SK-N-SH (cell line): ENCODE measurements at regions of chr13 and their contacts with region 1.

Region 1: DNA sequence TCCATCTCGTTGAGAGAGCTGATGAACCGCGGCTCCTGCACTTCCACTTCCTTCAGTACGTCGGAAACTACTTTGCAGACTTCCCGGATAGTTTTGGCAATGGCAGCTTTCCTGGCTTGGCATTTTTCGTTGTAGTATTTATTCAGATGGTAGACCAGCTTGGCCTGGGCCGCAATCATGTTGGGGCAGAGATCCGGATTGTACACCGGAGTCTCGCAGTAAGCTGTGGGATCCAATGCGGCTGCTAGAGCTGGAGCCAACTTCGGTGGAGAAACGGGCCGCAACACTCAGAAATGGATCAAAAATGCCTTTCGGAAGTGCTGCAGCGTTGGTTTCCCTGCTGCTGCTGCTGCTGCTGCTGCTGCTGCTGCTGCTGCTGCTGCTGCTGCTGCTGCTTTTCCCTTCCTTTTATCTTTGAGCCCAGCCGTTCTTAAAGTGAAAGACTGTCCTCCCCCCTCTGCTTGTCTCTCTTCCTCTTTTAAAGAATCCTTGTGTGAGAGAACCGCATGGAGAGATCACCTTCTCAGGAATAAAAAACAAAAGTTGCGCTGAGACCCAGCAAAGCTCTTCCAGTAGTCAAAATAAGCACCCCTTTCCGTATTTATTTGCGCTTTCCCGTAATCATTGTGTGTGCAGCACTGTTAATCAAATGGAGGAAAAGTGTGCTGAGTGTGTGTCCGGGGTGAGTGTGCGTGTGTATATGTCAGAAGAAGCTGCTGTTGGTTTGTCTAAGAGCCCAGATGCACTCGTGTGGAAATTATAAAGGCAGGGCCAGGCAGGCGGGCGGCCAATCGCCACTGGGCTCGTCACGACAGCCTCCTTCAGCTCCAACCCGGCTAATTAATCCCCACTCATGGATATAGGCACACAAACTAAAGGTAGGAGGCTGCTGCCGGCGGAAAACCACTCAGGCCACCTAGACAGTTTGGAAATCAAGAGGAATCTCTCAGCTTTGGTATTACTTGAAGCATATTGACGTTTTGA is at the start of gene MAB21L1:
- DNase-seq: peak; percentile 90
- H3K4me3 ChIP-seq: peak within 1 kb of the TSS; percentile 64 to 82
- H3K27ac ChIP-seq: peak within 1 kb of the TSS; percentile 93 to 99
- H3K4me1 ChIP-seq: peaks cover 2 to 6% of the 10 kb centered on the region in 2 experiments; a peak in 3 of 4 replicates
- H3K27me3 ChIP-seq: no peaks in the 10 kb centered on the region
- CTCF ChIP-seq: no peak
- EP300 ChIP-seq: peak in 1 of 2 experiments; percentile 23; a peak in 1 of 4 replicates
- RAD21 ChIP-seq: peak; percentile 22; the same call in 1 of the 2 replicates
- polyA plus RNA-seq, gene MAB21L1: 42.3 and 44.8 TPM in 2 replicates

Region 2: GRCh38 chr13:34637138-34637537 is 839.1 kb before region 1 on chr13:
- CTCF ChIA-PET with region 1: no interaction called
- POLR2A ChIA-PET with region 1: no interaction called
- DNase-seq: no peak
- H3K4me3 ChIP-seq: no peak overlapping the region
- H3K27ac ChIP-seq: no peak overlapping the region
- H3K4me1 ChIP-seq: peaks cover 0 to 7% of the 10 kb centered on the region in 2 experiments; a peak in 1 of 4 replicates
- H3K27me3 ChIP-seq: no peaks in the 10 kb centered on the region
- CTCF ChIP-seq: no peak
- EP300 ChIP-seq: no peak
- RAD21 ChIP-seq: no peak

Region 3: DNA sequence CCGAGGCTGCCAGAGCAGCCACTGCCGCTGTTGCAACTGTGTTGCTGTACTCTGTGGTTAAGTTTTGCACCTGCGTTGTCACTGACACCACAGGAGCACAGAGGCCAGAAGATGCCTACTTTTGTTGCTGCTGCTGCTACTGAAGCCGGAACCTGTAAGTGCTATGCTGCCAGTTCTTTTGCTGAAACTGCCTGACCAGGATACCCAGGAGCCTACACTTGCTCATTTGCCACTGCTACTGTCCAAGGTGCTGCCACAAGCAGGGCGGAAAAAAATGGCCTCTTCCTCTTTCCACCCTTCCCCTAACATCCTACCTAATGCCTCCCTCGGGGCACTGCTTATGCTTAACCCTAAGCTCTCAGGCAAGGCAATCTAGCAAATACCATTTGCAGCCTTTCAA is 563.2 kb before region 1 on chr13:
- CTCF ChIA-PET with region 1: no interaction called
- POLR2A ChIA-PET with region 1: no interaction called
- DNase-seq: no peak
- H3K4me3 ChIP-seq: no peak overlapping the region
- H3K27ac ChIP-seq: no peak overlapping the region
- H3K4me1 ChIP-seq: no peaks in the 10 kb centered on the region
- H3K27me3 ChIP-seq: no peaks in the 10 kb centered on the region
- CTCF ChIP-seq: no peak
- EP300 ChIP-seq: no peak
- RAD21 ChIP-seq: no peak

Region 4: GRCh38 chr13:35455022-35455421 is 21.2 kb before region 1 on chr13:
- CTCF ChIA-PET with region 1: no interaction called
- POLR2A ChIA-PET with region 1: no interaction called
- DNase-seq: no peak
- H3K4me3 ChIP-seq: no peak overlapping the region
- H3K27ac ChIP-seq: no peak overlapping the region
- H3K4me1 ChIP-seq: no peaks in the 10 kb centered on the region; a peak in 1 of 4 replicates
- H3K27me3 ChIP-seq: no peaks in the 10 kb centered on the region
- CTCF ChIP-seq: no peak
- EP300 ChIP-seq: no peak
- RAD21 ChIP-seq: no peak

Region 5: DNA sequence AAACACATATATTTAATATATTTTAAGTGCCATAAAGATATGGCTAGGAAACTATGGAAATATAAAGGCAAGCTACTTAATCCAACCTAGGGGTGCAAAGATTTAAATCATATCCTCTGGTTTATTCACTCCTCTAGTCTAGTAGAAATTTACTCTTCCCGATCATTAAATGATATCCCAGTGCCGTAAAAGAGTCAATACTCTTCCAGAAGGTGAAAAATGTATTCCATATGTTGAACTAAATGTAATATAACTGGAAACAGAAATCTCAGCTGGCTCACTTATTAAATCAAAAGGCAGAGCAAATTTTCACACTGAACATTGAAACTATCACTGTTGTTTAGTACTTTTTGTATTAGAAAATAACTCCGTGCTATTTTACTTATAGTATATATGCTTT is 10.9 kb before region 1 on chr13:
- CTCF ChIA-PET with region 1: interaction called, 4 read pairs
- POLR2A ChIA-PET with region 1: interaction called, 10 read pairs
- DNase-seq: no peak
- H3K4me3 ChIP-seq: no peak overlapping the region
- H3K27ac ChIP-seq: peak overlapping the region in 1 of 2 experiments; percentile 80; a peak in 2 of 4 replicates
- H3K4me1 ChIP-seq: peaks cover 9 to 16% of the 10 kb centered on the region in 2 experiments
- H3K27me3 ChIP-seq: no peaks in the 10 kb centered on the region
- CTCF ChIP-seq: no peak
- EP300 ChIP-seq: peak in 1 of 2 experiments; percentile 78; a peak in 1 of 4 replicates
- RAD21 ChIP-seq: no peak; the same call in 1 of the 2 replicates

Region 6: GRCh38 chr13:35501661-35502235 is 25.5 kb after region 1 on chr13:
- CTCF ChIA-PET with region 1: interaction called, 5 read pairs
- POLR2A ChIA-PET with region 1: interaction called, 10 read pairs
- DNase-seq: no peak
- H3K4me3 ChIP-seq: no peak overlapping the region
- H3K27ac ChIP-seq: peak overlapping the region in 1 of 2 experiments; percentile 86; a peak in 2 of 4 replicates
- H3K4me1 ChIP-seq: peaks cover 9 to 33% of the 10 kb centered on the region in 2 experiments; a peak in 3 of 4 replicates
- H3K27me3 ChIP-seq: no peaks in the 10 kb centered on the region
- CTCF ChIP-seq: no peak
- EP300 ChIP-seq: no peak
- RAD21 ChIP-seq: no peak

Region 7: DNA sequence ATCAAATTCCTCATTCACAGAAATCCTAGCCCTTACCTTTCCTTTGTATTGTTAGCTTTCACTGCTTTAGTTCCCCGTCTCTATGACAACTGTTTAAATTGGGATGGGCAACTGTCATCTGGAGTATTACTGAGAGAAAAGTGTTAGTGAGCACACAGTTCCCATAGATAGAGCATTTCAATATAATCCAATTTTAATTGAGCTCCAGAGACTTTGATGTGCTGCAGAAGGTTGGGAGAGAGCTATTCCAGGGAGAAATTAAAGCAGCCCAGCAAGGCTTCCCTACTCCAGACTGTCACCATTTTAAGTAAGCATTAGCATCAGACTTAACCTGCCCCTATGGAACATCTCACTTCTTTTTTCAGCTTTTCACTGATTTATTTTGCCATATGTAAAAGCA is 55.3 kb after region 1 on chr13:
- CTCF ChIA-PET with region 1: interaction called, 5 read pairs
- POLR2A ChIA-PET with region 1: interaction called, 11 read pairs
- DNase-seq: peak; percentile 24
- H3K4me3 ChIP-seq: no peak overlapping the region
- H3K27ac ChIP-seq: peak overlapping the region in 1 of 2 experiments; percentile 96; a peak in 2 of 4 replicates
- H3K4me1 ChIP-seq: peaks cover 0 to 62% of the 10 kb centered on the region in 2 experiments; a peak in 2 of 4 replicates
- H3K27me3 ChIP-seq: no peaks in the 10 kb centered on the region
- CTCF ChIP-seq: no peak
- EP300 ChIP-seq: peak in 1 of 2 experiments; percentile 36; a peak in 1 of 4 replicates
- RAD21 ChIP-seq: 0 out of 2 replicates have a peak, but pooled peaks have one; percentile 9

Region 8: DNA sequence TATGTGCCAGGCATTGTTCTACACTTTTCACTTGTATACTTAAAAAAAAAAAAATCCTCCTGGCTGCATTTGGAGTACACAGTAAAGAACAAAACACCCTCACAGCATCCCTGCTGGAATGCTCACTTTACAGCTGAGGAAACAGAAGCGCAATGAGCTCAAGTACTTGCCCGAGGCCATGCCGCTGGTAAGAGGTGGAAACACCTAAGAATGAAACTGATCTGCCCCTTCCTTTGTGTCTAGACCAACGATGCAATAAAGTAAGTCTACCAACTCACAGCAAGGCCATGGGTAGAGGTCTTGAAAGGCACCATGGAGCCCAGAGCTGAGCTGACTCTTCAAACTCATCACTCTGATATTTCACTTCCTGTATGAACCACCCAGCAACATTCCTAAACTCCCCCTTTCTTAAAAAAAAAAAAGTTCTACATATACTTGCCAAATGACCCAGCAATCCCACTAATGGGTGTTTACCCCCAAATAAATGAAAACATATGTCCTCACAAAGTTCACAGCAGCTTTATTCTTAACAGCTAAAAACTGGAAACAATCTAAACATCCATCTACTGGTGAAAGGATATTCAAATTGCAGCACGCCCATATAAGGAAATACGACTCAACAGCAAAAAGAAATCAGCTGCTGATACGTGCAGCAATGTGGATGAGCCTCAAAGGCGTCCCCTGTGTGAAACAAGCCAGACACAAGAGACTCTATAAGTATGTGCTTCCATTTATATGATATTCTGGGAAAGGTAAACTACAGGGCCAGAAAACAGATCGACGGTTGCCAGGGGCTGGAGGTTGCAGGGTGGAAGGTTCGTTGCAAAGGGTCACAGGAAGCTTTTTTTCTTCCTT is 236.9 kb after region 1 on chr13:
- CTCF ChIA-PET with region 1: interaction called, 8 read pairs
- POLR2A ChIA-PET with region 1: interaction called, 61 read pairs
- DNase-seq: peak; percentile 47
- H3K4me3 ChIP-seq: no peak overlapping the region
- H3K27ac ChIP-seq: peak overlapping the region; percentile 69 to 98
- H3K4me1 ChIP-seq: peaks cover 10 to 55% of the 10 kb centered on the region in 2 experiments; a peak in 3 of 4 replicates
- H3K27me3 ChIP-seq: no peaks in the 10 kb centered on the region
- CTCF ChIP-seq: no peak
- EP300 ChIP-seq: peak in 1 of 2 experiments; percentile 30; a peak in 2 of 4 replicates
- RAD21 ChIP-seq: no peak

Region 9: GRCh38 chr13:35818633-35819067 is 342.4 kb after region 1 on chr13:
- CTCF ChIA-PET with region 1: interaction called, 3 read pairs
- POLR2A ChIA-PET with region 1: interaction called, 10 read pairs
- DNase-seq: peak; percentile 51
- H3K4me3 ChIP-seq: no peak overlapping the region; a peak in 1 of 4 replicates
- H3K27ac ChIP-seq: no peak overlapping the region
- H3K4me1 ChIP-seq: peaks cover 0 to 8% of the 10 kb centered on the region in 2 experiments; a peak in 1 of 4 replicates
- H3K27me3 ChIP-seq: no peaks in the 10 kb centered on the region
- CTCF ChIP-seq: peak; percentile 85
- EP300 ChIP-seq: no peak
- RAD21 ChIP-seq: peak; percentile 85